Right lobe of liver (tissue), 6 donors: ENCODE measurements at regions of chr16 and their contacts with region 1.

Region 1: DNA sequence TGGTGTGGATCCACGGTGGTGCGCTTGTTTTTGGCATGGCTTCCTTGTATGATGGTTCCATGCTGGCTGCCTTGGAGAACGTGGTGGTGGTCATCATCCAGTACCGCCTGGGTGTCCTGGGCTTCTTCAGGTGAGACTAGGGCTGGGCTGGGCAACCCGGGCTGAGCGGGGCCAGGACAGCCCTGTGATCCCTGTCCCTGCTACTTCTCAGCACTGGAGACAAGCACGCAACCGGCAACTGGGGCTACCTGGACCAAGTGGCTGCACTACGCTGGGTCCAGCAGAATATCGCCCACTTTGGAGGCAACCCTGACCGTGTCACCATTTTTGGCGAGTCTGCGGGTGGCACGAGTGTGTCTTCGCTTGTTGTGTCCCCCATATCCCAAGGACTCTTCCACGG is 4.9 kb downstream of the CES2 start:
- DNase-seq: peak in 1 of 3 donors; percentile 43
- ATAC-seq: no peak
- H3K4me3 ChIP-seq: no peak overlapping the region
- H3K27ac ChIP-seq: no peak overlapping the region
- H3K4me1 ChIP-seq: peaks cover 0 to 31% (median 15%) of the 10 kb centered on the region in 4 donors
- H3K27me3 ChIP-seq: no peaks in the 10 kb centered on the region
- CTCF ChIP-seq: no peak
- POLR2A ChIP-seq: no peak

Region 2: GRCh38 chr16:66798161-66798560 is 142.1 kb before region 1 on chr16:
- intact Hi-C with region 1: no loop called
- DNase-seq: no peak
- ATAC-seq: no peak
- H3K4me3 ChIP-seq: no peak overlapping the region
- H3K27ac ChIP-seq: no peak overlapping the region
- H3K4me1 ChIP-seq: no peaks in the 10 kb centered on the region
- H3K27me3 ChIP-seq: no peaks in the 10 kb centered on the region
- CTCF ChIP-seq: no peak
- POLR2A ChIP-seq: no peak

Region 3: GRCh38 chr16:66845791-66846221 is 94.4 kb before region 1 on chr16:
- intact Hi-C with region 1: no loop called
- DNase-seq: no peak
- ATAC-seq: no peak
- H3K4me3 ChIP-seq: no peak overlapping the region
- H3K27ac ChIP-seq: no peak overlapping the region
- H3K4me1 ChIP-seq: peaks cover 0 to 10% (median 0%) of the 10 kb centered on the region in 4 donors
- H3K27me3 ChIP-seq: peaks cover 4 to 6% of the 10 kb centered on the region in 2 donors
- CTCF ChIP-seq: no peak
- POLR2A ChIP-seq: no peak

Region 4: DNA sequence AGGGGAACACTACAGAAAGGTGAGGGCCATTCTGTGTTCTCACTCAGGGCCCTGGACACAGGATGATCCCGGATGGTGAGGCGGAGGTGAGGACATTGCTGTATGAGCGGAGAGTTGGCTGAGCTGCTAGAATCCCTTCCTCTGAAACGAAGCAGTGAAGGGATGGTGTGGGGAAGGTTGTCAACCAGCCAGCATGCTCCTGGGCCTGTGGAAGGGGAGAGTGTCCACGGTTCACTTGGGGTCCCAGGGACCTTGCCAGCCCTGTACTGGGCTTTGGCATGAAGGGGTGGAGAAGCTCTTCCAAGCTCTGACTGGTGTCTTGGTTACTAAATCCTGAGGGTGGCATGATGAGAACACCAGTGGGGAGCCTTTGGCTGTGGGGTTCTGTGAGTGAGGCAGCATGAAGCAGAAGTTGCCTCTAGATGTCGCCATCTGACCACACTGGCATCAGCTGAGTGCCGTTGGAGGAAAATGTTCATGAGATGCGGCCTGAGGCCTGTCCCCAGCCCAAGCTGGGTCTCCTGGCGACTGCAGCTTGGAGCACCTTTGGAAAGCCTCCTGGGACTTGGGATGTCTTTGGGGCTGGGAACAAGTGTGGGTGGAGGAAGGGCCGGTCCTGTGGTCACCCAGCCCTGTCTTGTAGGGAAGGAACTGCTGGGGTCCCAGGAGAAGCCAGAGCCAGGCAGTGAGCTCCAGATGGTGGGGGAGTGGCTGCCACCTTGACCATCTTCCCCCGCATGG is 45.1 kb before region 1 on chr16:
- intact Hi-C with region 1: loop called in 1 of 2 experiments (anchors 5 kb)
- DNase-seq: peak; percentile 54 to 74 (median 70)
- ATAC-seq: peak; percentile 77 to 86 (median 80)
- H3K4me3 ChIP-seq: no peak overlapping the region
- H3K27ac ChIP-seq: no peak overlapping the region
- H3K4me1 ChIP-seq: peaks cover 0 to 16% (median 7%) of the 10 kb centered on the region in 4 donors
- H3K27me3 ChIP-seq: no peaks in the 10 kb centered on the region
- CTCF ChIP-seq: peak; percentile 82 to 85 (median 82)
- POLR2A ChIP-seq: no peak